Activated CD8-positive, alpha-beta memory T cell treated with anti-CD3 and anti-CD28 coated beads, Interleukin-2, amount 10 ng/mL, durations not matched to agents 7 days and 5 days (primary cell): ENCODE measurements at regions of chr10 and their contacts with region 1.

Region 1: GRCh38 chr10:4825851-4826665 is at the start of gene AKR1E2:
- DNase-seq: peak; percentile 81
- ATAC-seq: peak; percentile 88
- H3K4me3 Mint-ChIP-seq: peak within 1 kb of the TSS; percentile 56
- H3K27ac Mint-ChIP-seq: no peak within 1 kb of the TSS
- H3K4me1 Mint-ChIP-seq: peaks cover 5% of the 10 kb centered on the region
- H3K27me3 Mint-ChIP-seq: peaks cover 75% of the 10 kb centered on the region
- total RNA-seq, gene AKR1E2: 2.5 to 3.1 TPM

Region 2: DNA sequence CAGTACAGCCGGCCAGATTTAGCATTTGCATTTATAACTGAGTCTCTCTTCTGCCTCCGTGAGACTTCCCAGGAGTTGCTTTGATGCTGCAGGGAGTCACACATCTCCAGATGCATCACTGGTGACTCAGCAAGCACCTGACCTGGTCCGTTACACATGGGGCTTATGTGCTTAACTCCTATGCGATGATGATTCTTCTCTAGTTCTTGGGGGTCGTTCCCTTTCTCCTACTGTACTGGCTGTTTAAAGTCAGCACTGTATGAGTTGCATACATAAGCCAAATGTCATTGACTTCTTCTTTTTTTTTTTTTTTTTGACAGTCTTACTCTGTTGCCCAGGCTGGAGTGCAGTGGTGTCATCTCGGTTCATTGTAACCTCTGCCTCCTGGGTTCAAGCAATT is 13.0 kb before region 1 on chr10:
- CTCF ChIA-PET with region 1: interaction called, 13 read pairs
- DNase-seq: no peak
- ATAC-seq: no peak
- H3K4me3 Mint-ChIP-seq: no peak overlapping the region
- H3K27ac Mint-ChIP-seq: no peak overlapping the region
- H3K4me1 Mint-ChIP-seq: no peaks in the 10 kb centered on the region
- H3K27me3 Mint-ChIP-seq: peaks cover 11% of the 10 kb centered on the region

Region 3: GRCh38 chr10:5002013-5002727 is 176.1 kb after region 1 on chr10:
- CTCF ChIA-PET with region 1: no interaction called
- DNase-seq: no peak
- ATAC-seq: no peak
- H3K4me3 Mint-ChIP-seq: no peak overlapping the region
- H3K27ac Mint-ChIP-seq: no peak overlapping the region
- H3K4me1 Mint-ChIP-seq: no peaks in the 10 kb centered on the region
- H3K27me3 Mint-ChIP-seq: no peaks in the 10 kb centered on the region